ENCODE measurements at regions of chr14 and their contacts with region 1.

Region 1: GRCh38 chr14:68663385-68664076 is 129.3 kb downstream of the ZFP36L1 start:
- DNase-seq: peak; percentile 4 to 62
- H3K4me3 ChIP-seq: peak overlapping the region; percentile 3 to 19
- H3K27ac ChIP-seq: peak overlapping the region; percentile 87
- H3K4me1 ChIP-seq: peaks cover 73% of the 10 kb centered on the region
- H3K27me3 ChIP-seq: no peaks in the 10 kb centered on the region
- CTCF ChIP-seq: no peak
- POLR2A ChIP-seq: no peak

Region 2: GRCh38 chr14:68548194-68549056 is 115.1 kb before region 1 on chr14:
- intact Hi-C with region 1: loop called (anchors 10 kb)
- DNase-seq: peak in 1 of 2 donors; percentile 98
- H3K4me3 ChIP-seq: peak overlapping the region in 1 of 2 donors; percentile 23
- H3K27ac ChIP-seq: peak overlapping the region; percentile 96
- H3K4me1 ChIP-seq: peaks cover 98% of the 10 kb centered on the region
- H3K27me3 ChIP-seq: no peaks in the 10 kb centered on the region
- CTCF ChIP-seq: no peak
- POLR2A ChIP-seq: no peak

Measured in vagina (tissue), 2 donors.